ENCODE measurements at regions of chr4 and their contacts with region 1.

Region 1: DNA sequence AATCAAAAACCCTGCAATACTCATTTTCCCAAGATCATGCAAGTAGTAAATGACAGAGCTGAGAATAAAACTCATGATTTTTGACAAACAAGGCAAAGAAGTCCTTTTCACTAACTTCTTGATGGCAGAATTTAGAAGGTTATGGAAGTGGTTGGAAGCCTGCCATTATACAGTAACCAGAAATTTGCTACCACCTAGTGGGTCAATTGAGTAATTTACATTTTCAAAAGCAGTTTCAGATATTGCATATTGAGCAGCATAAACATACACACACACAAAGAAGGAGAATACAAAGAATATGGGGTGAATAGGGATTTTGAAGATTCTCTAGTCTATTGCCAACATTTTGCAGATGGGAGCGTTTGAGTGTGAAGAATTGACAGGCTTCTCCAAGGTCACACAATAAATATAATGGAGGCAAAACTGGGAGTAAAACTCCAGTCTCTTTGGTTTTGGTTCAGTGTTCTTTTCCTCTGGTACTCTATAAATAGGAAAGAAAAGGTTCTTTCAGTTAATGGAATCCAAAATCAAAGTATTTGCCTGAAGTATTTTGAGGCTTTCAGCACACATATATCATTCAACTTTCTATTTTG is 70.2 kb downstream of the GC start:
- DNase-seq: peak; percentile 62
- H3K4me3 Mint-ChIP-seq: no peak overlapping the region
- H3K27ac Mint-ChIP-seq: no peak overlapping the region
- H3K4me1 Mint-ChIP-seq: no peaks in the 10 kb centered on the region
- H3K27me3 Mint-ChIP-seq: peaks cover 20% of the 10 kb centered on the region
- CTCF ChIP-seq: peak; percentile 47

Region 2: GRCh38 chr4:70651864-70652506 is 1061.7 kb before region 1 on chr4:
- CTCF ChIA-PET with region 1: interaction called, 8 read pairs
- POLR2A ChIA-PET with region 1: no interaction called
- intact Hi-C with region 1: loop called (anchors 2 kb)
- DNase-seq: peak; percentile 40
- H3K4me3 Mint-ChIP-seq: no peak overlapping the region
- H3K27ac Mint-ChIP-seq: no peak overlapping the region
- H3K4me1 Mint-ChIP-seq: no peaks in the 10 kb centered on the region
- H3K27me3 Mint-ChIP-seq: peaks cover 12% of the 10 kb centered on the region
- CTCF ChIP-seq: peak; percentile 69

Region 3: GRCh38 chr4:71130827-71131603 is 582.7 kb before region 1 on chr4:
- CTCF ChIA-PET with region 1: interaction called, 14 read pairs
- POLR2A ChIA-PET with region 1: no interaction called
- intact Hi-C with region 1: loop called (anchors 2 kb)
- DNase-seq: peak; percentile 34
- H3K4me3 Mint-ChIP-seq: no peak overlapping the region
- H3K27ac Mint-ChIP-seq: no peak overlapping the region
- H3K4me1 Mint-ChIP-seq: peaks cover 5% of the 10 kb centered on the region
- H3K27me3 Mint-ChIP-seq: no peaks in the 10 kb centered on the region
- CTCF ChIP-seq: no peak

Region 4: GRCh38 chr4:71229477-71230270 is 484.0 kb before region 1 on chr4:
- CTCF ChIA-PET with region 1: interaction called, 46 read pairs
- POLR2A ChIA-PET with region 1: no interaction called
- intact Hi-C with region 1: loop called (anchors 1 kb)
- DNase-seq: peak; percentile 54
- H3K4me3 Mint-ChIP-seq: no peak overlapping the region
- H3K27ac Mint-ChIP-seq: no peak overlapping the region
- H3K4me1 Mint-ChIP-seq: no peaks in the 10 kb centered on the region
- H3K27me3 Mint-ChIP-seq: no peaks in the 10 kb centered on the region
- CTCF ChIP-seq: peak; percentile 70

Region 5: GRCh38 chr4:71526626-71527406 is 186.9 kb before region 1 on chr4:
- CTCF ChIA-PET with region 1: interaction called, 3 read pairs
- POLR2A ChIA-PET with region 1: no interaction called
- intact Hi-C with region 1: loop called (anchors 1 kb)
- DNase-seq: no peak
- H3K4me3 Mint-ChIP-seq: no peak overlapping the region
- H3K27ac Mint-ChIP-seq: no peak overlapping the region
- H3K4me1 Mint-ChIP-seq: no peaks in the 10 kb centered on the region
- H3K27me3 Mint-ChIP-seq: no peaks in the 10 kb centered on the region
- CTCF ChIP-seq: no peak

Region 6: GRCh38 chr4:72468904-72469502 is 755.3 kb after region 1 on chr4:
- CTCF ChIA-PET with region 1: no interaction called
- POLR2A ChIA-PET with region 1: no interaction called
- intact Hi-C with region 1: no loop called
- DNase-seq: peak; percentile 54
- H3K4me3 Mint-ChIP-seq: no peak overlapping the region
- H3K27ac Mint-ChIP-seq: no peak overlapping the region
- H3K4me1 Mint-ChIP-seq: peaks cover 7% of the 10 kb centered on the region
- H3K27me3 Mint-ChIP-seq: no peaks in the 10 kb centered on the region
- CTCF ChIP-seq: peak; percentile 55